Activated CD4-positive, alpha-beta T cell treated with anti-CD3 and anti-CD28 coated beads for 36 hours (primary cell): ENCODE measurements at regions of chr13 and their contacts with region 1.

Region 1: DNA sequence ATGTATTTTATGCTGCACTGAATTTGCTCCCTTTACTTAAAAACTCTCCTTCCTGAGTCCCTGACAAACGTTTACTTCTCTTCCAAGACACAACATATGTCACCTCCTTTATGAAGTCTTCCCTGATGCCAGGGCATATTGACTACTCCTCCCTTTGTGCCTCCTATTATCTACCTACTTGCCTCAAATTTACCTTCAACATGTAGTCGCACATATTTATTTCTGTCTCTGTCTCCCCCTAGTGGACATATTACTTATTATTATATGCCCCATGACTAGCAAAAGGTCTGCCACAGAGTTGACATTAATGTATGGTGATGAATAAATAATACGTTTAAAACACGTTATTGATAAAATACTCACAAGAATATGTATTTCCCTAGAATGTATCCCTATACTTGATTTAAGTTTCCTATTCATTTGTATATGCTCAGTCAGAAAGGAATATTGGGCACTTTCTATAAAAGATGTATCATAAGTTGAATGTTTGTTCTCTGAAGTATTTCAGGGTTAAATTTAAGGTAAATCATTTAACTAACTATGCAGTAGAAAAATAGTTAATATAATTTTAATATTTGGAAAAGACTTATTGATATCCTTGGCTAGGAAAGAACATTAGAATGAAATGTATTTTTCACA is 250.3 kb upstream of the ATXN8OS start:
- DNase-seq: no peak
- ATAC-seq: no peak
- H3K4me3 Mint-ChIP-seq: no peak overlapping the region
- H3K27ac Mint-ChIP-seq: no peak overlapping the region
- H3K4me1 Mint-ChIP-seq: no peaks in the 10 kb centered on the region
- H3K27me3 Mint-ChIP-seq: no peaks in the 10 kb centered on the region

Region 2: GRCh38 chr13:69565334-69565733 is 292.0 kb before region 1 on chr13:
- CTCF ChIA-PET with region 1: no interaction called
- POLR2A ChIA-PET with region 1: no interaction called
- intact Hi-C with region 1: loop called in 1 of 2 experiments (anchors 10 kb)
- DNase-seq: peak; percentile 7
- ATAC-seq: no peak
- H3K4me3 Mint-ChIP-seq: no peak overlapping the region
- H3K27ac Mint-ChIP-seq: no peak overlapping the region
- H3K4me1 Mint-ChIP-seq: no peaks in the 10 kb centered on the region
- H3K27me3 Mint-ChIP-seq: no peaks in the 10 kb centered on the region

Region 3: DNA sequence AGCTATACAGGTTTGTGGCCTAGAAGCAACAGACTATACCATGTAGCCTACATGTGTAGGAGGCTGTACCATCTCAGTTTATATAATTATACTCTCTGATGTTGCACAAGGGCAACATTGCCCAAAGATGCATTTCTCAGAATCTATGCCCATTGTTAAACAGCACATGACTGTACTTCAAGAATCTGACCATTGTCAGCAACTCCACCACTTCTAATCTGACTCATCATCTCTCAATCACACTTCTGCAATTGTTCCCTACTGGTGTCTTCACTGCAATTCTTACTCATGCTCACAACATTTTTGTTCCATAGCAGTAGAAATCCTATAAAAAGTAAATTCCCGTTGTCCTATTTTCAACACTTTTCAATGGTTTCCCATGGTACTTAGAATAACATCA is 186.4 kb after region 1 on chr13:
- CTCF ChIA-PET with region 1: no interaction called
- POLR2A ChIA-PET with region 1: no interaction called
- intact Hi-C with region 1: no loop called
- DNase-seq: no peak
- ATAC-seq: no peak
- H3K4me3 Mint-ChIP-seq: no peak overlapping the region
- H3K27ac Mint-ChIP-seq: no peak overlapping the region
- H3K4me1 Mint-ChIP-seq: no peaks in the 10 kb centered on the region
- H3K27me3 Mint-ChIP-seq: no peaks in the 10 kb centered on the region